Activated CD4-positive, alpha-beta memory T cell treated with anti-CD3 and anti-CD28 coated beads, Interleukin-2, amount 10 ng/mL, durations not matched to agents 7 days and 5 days (primary cell): ENCODE measurements at regions of chr11 and their contacts with region 1.

Region 1: GRCh38 chr11:62665075-62665598 is at the starts of genes C11orf98 and CSKMT:
- DNase-seq: peak; percentile 96
- H3K4me3 Mint-ChIP-seq: peak within 1 kb of the TSS; percentile 93
- H3K27ac Mint-ChIP-seq: peak within 1 kb of the TSS; percentile 88
- H3K4me1 Mint-ChIP-seq: peaks cover 52% of the 10 kb centered on the region
- H3K27me3 Mint-ChIP-seq: no peaks in the 10 kb centered on the region
- total RNA-seq, gene C11orf98: 88.4 to 93.5 TPM
- total RNA-seq, gene CSKMT: 16.6 to 18.3 TPM

Region 2: DNA sequence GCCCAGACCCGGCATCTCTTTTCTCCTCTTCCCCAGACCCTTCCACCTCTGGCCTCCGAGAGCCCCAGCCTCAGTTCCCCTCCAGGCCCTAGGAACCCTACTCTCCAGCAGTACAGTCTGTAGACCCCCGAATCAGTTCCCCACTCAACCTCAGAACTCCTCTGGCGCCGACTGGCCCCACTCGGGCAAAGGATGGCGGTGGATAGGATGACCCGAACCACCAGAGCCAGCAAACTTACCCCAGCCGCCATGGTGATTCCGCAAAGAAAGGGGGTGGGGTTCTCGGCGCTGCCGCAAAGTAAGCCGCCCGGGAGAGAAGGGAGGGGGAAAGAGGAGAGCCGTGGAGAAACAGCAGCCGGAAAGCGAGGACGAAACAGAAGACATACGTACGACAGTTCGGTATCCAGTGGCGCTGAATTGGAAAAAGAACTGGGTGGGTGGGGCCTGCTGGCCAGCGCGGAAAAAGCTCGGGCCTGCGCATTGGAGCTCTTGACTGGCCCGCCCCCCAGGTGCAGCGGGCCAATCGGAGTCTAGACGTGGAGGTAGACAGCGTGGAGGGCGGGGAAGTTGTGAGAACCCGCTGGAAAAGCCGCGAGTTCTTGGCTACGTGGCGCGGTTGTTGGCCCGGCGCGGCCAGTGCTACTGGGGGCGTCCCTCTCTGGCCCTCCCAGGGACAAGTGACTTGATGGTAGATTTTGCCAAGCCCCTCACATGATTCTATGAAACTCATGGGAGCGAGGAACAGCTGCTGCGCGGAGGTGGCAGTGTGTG is 91.4 kb before region 1 on chr11 and contains the start of gene EEF1G:
- CTCF ChIA-PET with region 1: interaction called, 6 read pairs
- POLR2A ChIA-PET with region 1: interaction called, 20 read pairs
- DNase-seq: peak; percentile 99
- H3K4me3 Mint-ChIP-seq: peak within 1 kb of the TSS; percentile 94
- H3K27ac Mint-ChIP-seq: peak within 1 kb of the TSS; percentile 91
- H3K4me1 Mint-ChIP-seq: peaks cover 58% of the 10 kb centered on the region
- H3K27me3 Mint-ChIP-seq: no peaks in the 10 kb centered on the region
- total RNA-seq, gene EEF1G: 991 to 999 TPM

Region 3: GRCh38 chr11:62621567-62622470 is 43.3 kb before region 1 on chr11 and contains the start of gene B3GAT3:
- CTCF ChIA-PET with region 1: interaction called, 7 read pairs
- POLR2A ChIA-PET with region 1: interaction called, 39 read pairs
- DNase-seq: peak; percentile 97
- H3K4me3 Mint-ChIP-seq: peak within 1 kb of the TSS; percentile 87
- H3K27ac Mint-ChIP-seq: peak within 1 kb of the TSS; percentile 98
- H3K4me1 Mint-ChIP-seq: peaks cover 29% of the 10 kb centered on the region
- H3K27me3 Mint-ChIP-seq: no peaks in the 10 kb centered on the region
- total RNA-seq, gene B3GAT3: 58.9 to 67.1 TPM

Region 4: GRCh38 chr11:62678770-62679696 is 13.9 kb after region 1 on chr11 and contains the start of gene UBXN1:
- CTCF ChIA-PET with region 1: interaction called, 6 read pairs
- POLR2A ChIA-PET with region 1: interaction called, 105 read pairs
- DNase-seq: peak; percentile 87
- H3K4me3 Mint-ChIP-seq: peak within 1 kb of the TSS; percentile 88
- H3K27ac Mint-ChIP-seq: peak within 1 kb of the TSS; percentile 78
- H3K4me1 Mint-ChIP-seq: peaks cover 40% of the 10 kb centered on the region
- H3K27me3 Mint-ChIP-seq: no peaks in the 10 kb centered on the region
- total RNA-seq, gene UBXN1: 135 to 139 TPM

Region 5: DNA sequence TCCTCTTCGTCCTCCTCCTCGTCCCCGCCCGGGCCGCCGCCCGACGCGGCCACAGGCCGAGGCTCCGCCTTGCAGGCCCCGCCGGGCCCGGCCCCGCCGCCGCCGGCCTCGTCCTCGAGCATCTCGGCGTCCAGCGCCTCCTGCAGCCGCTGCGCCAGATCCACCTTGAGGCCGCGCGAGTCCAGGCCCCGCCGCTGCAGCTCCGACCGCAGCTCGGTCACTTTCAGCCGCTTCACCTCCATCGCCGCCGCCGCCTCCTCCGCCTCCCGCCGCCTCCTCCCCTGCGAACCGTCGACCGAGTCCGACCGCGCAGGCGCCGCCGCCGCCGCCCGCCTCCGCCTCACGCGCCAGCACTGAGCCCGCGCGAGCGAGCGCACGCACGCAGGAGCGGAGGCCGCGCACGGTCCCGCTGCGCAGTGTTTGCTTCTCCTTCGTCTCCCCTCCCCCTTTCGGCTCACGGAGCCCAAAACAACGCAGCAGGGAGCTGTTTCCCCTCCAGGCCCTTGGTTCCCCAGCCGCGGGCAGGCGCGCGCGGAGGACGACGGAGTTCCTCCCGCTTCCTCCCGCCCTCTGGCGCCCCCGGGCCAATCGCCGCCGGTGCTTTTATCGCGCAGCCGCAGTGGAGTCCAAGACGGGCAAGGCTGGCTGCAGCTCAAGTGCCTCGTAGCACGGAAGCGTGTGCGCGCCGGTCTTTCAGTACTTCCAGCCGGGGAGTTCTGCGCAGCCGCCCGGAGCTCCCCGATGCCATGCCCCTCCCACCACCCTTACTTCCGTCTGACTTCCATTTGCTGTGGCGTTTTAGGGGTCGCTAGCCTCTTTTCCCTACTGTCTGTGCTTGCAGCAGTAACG is 62.0 kb after region 1 on chr11 and contains the start of gene HNRNPUL2:
- CTCF ChIA-PET with region 1: no interaction called
- POLR2A ChIA-PET with region 1: interaction called, 48 read pairs
- DNase-seq: peak; percentile 99
- H3K4me3 Mint-ChIP-seq: peak within 1 kb of the TSS; percentile 87
- H3K27ac Mint-ChIP-seq: peak within 1 kb of the TSS; percentile 97
- H3K4me1 Mint-ChIP-seq: peaks cover 50% of the 10 kb centered on the region
- H3K27me3 Mint-ChIP-seq: no peaks in the 10 kb centered on the region
- total RNA-seq, gene HNRNPUL2: 65.1 to 65.3 TPM

Region 6: DNA sequence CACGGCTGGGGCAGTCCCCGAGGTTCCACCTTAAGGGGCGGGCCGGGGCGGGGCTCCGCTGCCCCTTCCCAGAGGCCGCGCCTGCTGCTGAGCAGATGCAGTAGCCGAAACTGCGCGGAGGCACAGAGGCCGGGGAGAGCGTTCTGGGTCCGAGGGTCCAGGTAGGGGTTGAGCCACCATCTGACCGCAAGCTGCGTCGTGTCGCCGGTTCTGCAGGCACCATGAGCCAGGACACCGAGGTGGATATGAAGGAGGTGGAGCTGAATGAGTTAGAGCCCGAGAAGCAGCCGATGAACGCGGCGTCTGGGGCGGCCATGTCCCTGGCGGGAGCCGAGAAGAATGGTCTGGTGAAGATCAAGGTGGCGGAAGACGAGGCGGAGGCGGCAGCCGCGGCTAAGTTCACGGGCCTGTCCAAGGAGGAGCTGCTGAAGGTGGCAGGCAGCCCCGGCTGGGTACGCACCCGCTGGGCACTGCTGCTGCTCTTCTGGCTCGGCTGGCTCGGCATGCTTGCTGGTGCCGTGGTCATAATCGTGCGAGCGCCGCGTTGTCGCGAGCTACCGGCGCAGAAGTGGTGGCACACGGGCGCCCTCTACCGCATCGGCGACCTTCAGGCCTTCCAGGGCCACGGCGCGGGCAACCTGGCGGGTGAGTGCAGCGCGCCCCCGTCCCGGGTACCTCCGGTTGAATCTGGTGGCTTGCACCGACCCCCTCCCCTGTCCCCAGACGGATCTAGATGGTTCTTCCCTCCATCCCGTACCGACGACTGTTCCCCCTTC is 215.9 kb after region 1 on chr11 and contains the start of gene SLC3A2:
- CTCF ChIA-PET with region 1: interaction called, 6 read pairs
- POLR2A ChIA-PET with region 1: interaction called, 11 read pairs
- DNase-seq: peak; percentile 92
- H3K4me3 Mint-ChIP-seq: peak within 1 kb of the TSS; percentile 99
- H3K27ac Mint-ChIP-seq: peak within 1 kb of the TSS; percentile 100
- H3K4me1 Mint-ChIP-seq: peaks cover 51% of the 10 kb centered on the region
- H3K27me3 Mint-ChIP-seq: no peaks in the 10 kb centered on the region
- total RNA-seq, gene SLC3A2: 262 to 279 TPM

Region 7: DNA sequence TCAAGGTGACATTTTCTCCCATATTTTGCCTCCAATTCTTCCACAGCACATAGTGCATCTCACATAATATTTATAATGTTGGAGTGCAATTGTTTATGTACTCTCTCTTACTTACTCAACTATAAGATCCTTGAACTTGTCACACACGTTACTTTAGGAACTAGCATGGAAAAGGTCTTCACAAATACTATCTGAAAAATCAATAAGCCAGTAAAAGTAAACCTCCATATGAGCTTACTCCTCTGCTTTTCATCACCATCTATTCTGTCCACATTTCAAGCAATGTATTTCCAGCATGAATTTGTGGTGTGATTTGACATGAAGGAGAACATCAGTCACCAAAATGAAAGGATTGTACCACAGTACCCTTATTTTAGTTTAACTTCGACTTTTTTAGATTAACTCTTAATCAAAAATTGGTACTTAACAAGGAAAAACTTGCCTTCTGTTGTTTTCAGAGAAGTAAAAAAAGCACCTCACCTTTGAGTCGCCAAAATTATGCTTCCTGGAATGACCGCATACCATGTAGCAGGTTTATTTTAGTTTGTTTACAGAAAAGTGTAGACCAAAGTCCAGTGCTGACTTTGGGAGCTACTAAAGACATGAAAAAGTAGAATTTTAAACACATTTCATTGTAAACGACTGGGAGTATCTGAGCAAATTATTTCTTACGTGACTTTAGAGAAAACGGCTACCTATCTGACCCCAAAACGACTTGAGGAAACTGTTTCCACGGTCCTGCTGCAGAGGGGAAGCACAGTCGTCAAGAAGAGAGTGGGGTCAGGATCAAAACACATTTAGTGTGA is 704.2 kb after region 1 on chr11 and contains the start of gene SLC22A9:
- CTCF ChIA-PET with region 1: no interaction called
- POLR2A ChIA-PET with region 1: no interaction called
- DNase-seq: no peak
- H3K4me3 Mint-ChIP-seq: no peak within 1 kb of the TSS
- H3K27ac Mint-ChIP-seq: no peak within 1 kb of the TSS
- H3K4me1 Mint-ChIP-seq: no peaks in the 10 kb centered on the region
- H3K27me3 Mint-ChIP-seq: peaks cover 7% of the 10 kb centered on the region
- total RNA-seq, gene SLC22A9: not detected